ENCODE measurements at regions of chr12 and their contacts with region 1.

Region 1: DNA sequence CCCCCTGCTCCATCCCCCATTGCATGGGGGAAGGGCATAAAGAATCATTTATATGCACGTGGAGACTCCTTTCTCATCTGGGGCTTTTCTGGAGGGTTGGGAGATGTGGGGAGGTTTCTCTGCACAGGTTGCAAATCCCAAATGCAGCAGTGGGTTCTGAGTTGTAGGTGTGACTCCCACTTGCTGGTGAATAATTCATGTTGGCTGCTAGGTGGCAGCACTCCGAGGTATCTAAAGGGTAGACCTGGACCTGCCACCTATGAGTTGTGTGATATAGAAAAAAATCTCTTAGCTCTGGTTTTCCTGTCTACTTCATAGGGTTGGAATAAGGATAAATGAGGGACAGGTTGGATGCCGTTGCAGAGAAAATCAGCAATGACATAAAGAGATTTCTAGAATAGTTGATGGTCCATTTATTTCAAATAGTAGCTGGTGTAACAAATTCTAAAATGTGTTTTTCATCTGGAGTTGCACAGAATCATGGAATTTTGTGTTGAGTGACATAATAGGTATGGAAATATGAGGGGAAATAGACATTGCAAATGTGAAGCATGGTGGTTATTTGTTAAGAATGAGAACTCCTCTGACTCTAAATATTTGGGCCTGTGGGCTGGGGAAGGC is 4.6 kb downstream of the MARCHF9 start:
- DNase-seq: peak; percentile 58
- ATAC-seq: no peak
- H3K4me3 Mint-ChIP-seq: no peak overlapping the region
- H3K27ac Mint-ChIP-seq: no peak overlapping the region
- H3K4me1 Mint-ChIP-seq: peaks cover 41% of the 10 kb centered on the region
- H3K27me3 Mint-ChIP-seq: no peaks in the 10 kb centered on the region
- CTCF ChIP-seq: peak; percentile 69

Region 2: GRCh38 chr12:57078519-57079404 is 680.7 kb before region 1 on chr12 and contains the start of gene NEMP1:
- CTCF ChIA-PET with region 1: no interaction called
- POLR2A ChIA-PET with region 1: no interaction called
- intact Hi-C with region 1: no loop called
- DNase-seq: peak; percentile 98
- ATAC-seq: peak; percentile 96
- H3K4me3 Mint-ChIP-seq: peak within 1 kb of the TSS; percentile 100
- H3K27ac Mint-ChIP-seq: peak within 1 kb of the TSS; percentile 99
- H3K4me1 Mint-ChIP-seq: peaks cover 31% of the 10 kb centered on the region
- H3K27me3 Mint-ChIP-seq: no peaks in the 10 kb centered on the region
- CTCF ChIP-seq: no peak
- total RNA-seq, gene NEMP1: 76.1 to 80.6 TPM

Region 3: GRCh38 chr12:57771708-57772428 is 12.4 kb after region 1 on chr12 and contains the start of gene METTL1:
- CTCF ChIA-PET with region 1: interaction called, 122 read pairs
- POLR2A ChIA-PET with region 1: interaction called, 9 read pairs
- intact Hi-C with region 1: no loop called
- DNase-seq: peak; percentile 98
- ATAC-seq: peak; percentile 89
- H3K4me3 Mint-ChIP-seq: peak within 1 kb of the TSS; percentile 99
- H3K27ac Mint-ChIP-seq: peak within 1 kb of the TSS; percentile 99
- H3K4me1 Mint-ChIP-seq: peaks cover 13% of the 10 kb centered on the region
- H3K27me3 Mint-ChIP-seq: no peaks in the 10 kb centered on the region
- CTCF ChIP-seq: no peak
- total RNA-seq, gene METTL1: 29.6 to 34.1 TPM